Activated CD4-positive, alpha-beta memory T cell treated with anti-CD3 and anti-CD28 coated beads for 36 hours (primary cell): ENCODE measurements at regions of chr19 and their contacts with region 1.

Region 1: DNA sequence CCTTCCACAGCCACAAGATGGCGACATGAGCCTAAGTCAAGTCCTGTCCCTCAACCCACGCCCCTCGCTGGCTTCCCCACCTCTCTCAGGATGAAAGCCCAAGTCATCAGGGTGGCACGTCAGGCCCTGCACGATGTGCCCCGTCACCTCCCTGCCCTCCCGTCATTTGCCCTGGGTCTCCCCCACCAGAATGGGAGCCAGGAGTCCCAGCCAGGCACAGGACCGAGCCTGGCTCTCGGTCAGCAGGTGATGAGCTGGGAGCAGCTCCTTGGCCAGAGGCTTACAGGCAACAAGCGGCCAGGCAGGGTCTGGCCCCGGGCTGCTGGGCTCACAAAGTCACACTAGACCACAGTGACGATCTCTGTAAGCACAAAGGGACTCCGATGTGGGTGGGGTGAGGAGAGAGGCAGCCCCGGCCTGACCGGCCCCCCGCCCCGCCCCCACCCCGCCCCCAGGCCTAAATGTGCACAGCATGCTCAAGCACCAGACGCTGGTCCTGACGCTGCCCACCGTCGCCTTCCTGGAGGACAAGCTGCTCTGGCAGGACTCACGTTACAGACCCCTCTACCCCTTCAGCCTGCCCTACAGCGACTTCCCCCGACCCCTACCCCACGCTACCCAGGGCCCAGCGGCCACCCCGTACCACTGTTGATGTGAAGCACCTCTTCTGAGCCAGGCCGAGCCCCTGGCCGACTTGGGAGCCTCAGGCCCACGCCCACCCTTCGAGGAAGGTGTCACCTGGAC is 7.3 kb downstream of the MRPL4 start:
- DNase-seq: peak; percentile 98
- H3K4me3 Mint-ChIP-seq: no peak overlapping the region
- H3K27ac Mint-ChIP-seq: peak overlapping the region; percentile 93
- H3K4me1 Mint-ChIP-seq: peaks cover 26% of the 10 kb centered on the region
- H3K27me3 Mint-ChIP-seq: no peaks in the 10 kb centered on the region

Region 2: DNA sequence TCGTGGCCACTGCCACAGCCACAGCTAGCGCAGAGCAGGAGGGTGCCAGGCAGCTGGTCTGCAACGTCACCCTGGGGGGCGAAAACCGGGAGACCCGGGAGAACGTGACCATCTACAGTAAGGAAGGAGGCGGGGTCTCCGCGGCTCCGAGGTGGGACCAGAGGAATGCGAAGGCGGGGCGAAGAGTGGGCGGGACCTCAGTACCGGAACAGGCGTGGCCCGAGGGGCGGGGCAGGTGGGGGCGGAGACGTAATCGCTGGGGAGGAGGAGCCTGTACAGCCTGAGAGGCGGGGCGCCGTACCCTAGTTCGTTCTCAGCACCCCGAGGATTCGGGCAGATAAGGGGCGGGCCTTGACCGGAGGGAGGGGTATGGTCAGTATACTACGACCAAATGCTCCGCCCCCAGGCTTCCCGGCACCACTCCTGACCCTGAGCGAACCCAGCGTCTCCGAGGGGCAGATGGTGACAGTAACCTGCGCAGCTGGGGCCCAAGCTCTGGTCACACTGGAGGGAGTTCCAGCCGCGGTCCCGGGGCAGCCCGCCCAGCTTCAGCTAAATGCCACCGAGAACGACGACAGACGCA is 33.0 kb after region 1 on chr19:
- CTCF ChIA-PET with region 1: interaction called, 39 read pairs
- POLR2A ChIA-PET with region 1: interaction called, 5 read pairs
- intact Hi-C with region 1: no loop called
- DNase-seq: peak; percentile 87
- H3K4me3 Mint-ChIP-seq: peak overlapping the region; percentile 68
- H3K27ac Mint-ChIP-seq: no peak overlapping the region
- H3K4me1 Mint-ChIP-seq: peaks cover 61% of the 10 kb centered on the region
- H3K27me3 Mint-ChIP-seq: peaks cover 76% of the 10 kb centered on the region

Region 3: GRCh38 chr19:10380313-10381102 is 121.2 kb after region 1 on chr19 and contains the start of gene TYK2:
- CTCF ChIA-PET with region 1: interaction called, 20 read pairs
- POLR2A ChIA-PET with region 1: interaction called, 13 read pairs
- intact Hi-C with region 1: loop called (anchors 2 kb)
- DNase-seq: peak; percentile 98
- H3K4me3 Mint-ChIP-seq: peak within 1 kb of the TSS; percentile 88
- H3K27ac Mint-ChIP-seq: peak within 1 kb of the TSS; percentile 88
- H3K4me1 Mint-ChIP-seq: peaks cover 20% of the 10 kb centered on the region
- H3K27me3 Mint-ChIP-seq: no peaks in the 10 kb centered on the region
- total RNA-seq, gene TYK2: 168 to 186 TPM